ENCODE measurements at regions of chr9 and their contacts with region 1.

Region 1: GRCh38 chr9:4297151-4297785 is 2.6 kb downstream of the GLIS3 start:
- DNase-seq: peak; percentile 75
- ATAC-seq: peak; percentile 32
- H3K4me3 ChIP-seq: peak overlapping the region; percentile 94
- H3K27ac ChIP-seq: peak overlapping the region; percentile 91
- H3K4me1 ChIP-seq: peaks cover 57% of the 10 kb centered on the region
- H3K27me3 ChIP-seq: no peaks in the 10 kb centered on the region
- CTCF ChIP-seq: peak; percentile 61

Region 2: GRCh38 chr9:3875364-3876132 is 421.7 kb before region 1 on chr9:
- CTCF ChIA-PET with region 1: no interaction called
- POLR2A ChIA-PET with region 1: no interaction called
- intact Hi-C with region 1: loop called (anchors 2 kb)
- DNase-seq: peak; percentile 97
- ATAC-seq: peak; percentile 76
- H3K4me3 ChIP-seq: peak overlapping the region; percentile 10; the same call in 1 of the 2 replicates
- H3K27ac ChIP-seq: peak overlapping the region; percentile 99
- H3K4me1 ChIP-seq: peaks cover 35% of the 10 kb centered on the region
- H3K27me3 ChIP-seq: no peaks in the 10 kb centered on the region
- CTCF ChIP-seq: no peak

Region 3: GRCh38 chr9:4092793-4093709 is 204.2 kb before region 1 on chr9:
- CTCF ChIA-PET with region 1: no interaction called
- POLR2A ChIA-PET with region 1: no interaction called
- intact Hi-C with region 1: no loop called
- DNase-seq: no peak
- ATAC-seq: no peak
- H3K4me3 ChIP-seq: no peak overlapping the region
- H3K27ac ChIP-seq: no peak overlapping the region
- H3K4me1 ChIP-seq: no peaks in the 10 kb centered on the region
- H3K27me3 ChIP-seq: no peaks in the 10 kb centered on the region
- CTCF ChIP-seq: no peak

Region 4: GRCh38 chr9:4137234-4137633 is 160.0 kb before region 1 on chr9:
- CTCF ChIA-PET with region 1: no interaction called
- POLR2A ChIA-PET with region 1: no interaction called
- intact Hi-C with region 1: loop called (anchors 5 kb)
- DNase-seq: peak; percentile 96
- ATAC-seq: peak; percentile 85
- H3K4me3 ChIP-seq: peak overlapping the region; percentile 58
- H3K27ac ChIP-seq: peak overlapping the region; percentile 99
- H3K4me1 ChIP-seq: peaks cover 40% of the 10 kb centered on the region
- H3K27me3 ChIP-seq: no peaks in the 10 kb centered on the region
- CTCF ChIP-seq: no peak

Region 5: GRCh38 chr9:4315582-4316215 is 18.4 kb after region 1 on chr9:
- CTCF ChIA-PET with region 1: interaction called, 16 read pairs
- POLR2A ChIA-PET with region 1: no interaction called
- intact Hi-C with region 1: no loop called
- DNase-seq: peak; percentile 73
- ATAC-seq: peak; percentile 96
- H3K4me3 ChIP-seq: no peak overlapping the region
- H3K27ac ChIP-seq: no peak overlapping the region
- H3K4me1 ChIP-seq: no peaks in the 10 kb centered on the region
- H3K27me3 ChIP-seq: no peaks in the 10 kb centered on the region
- CTCF ChIP-seq: peak; percentile 80

Region 6: GRCh38 chr9:4353236-4353635 is 56.0 kb after region 1 on chr9:
- CTCF ChIA-PET with region 1: no interaction called
- POLR2A ChIA-PET with region 1: no interaction called
- intact Hi-C with region 1: no loop called
- DNase-seq: no peak
- ATAC-seq: no peak
- H3K4me3 ChIP-seq: no peak overlapping the region
- H3K27ac ChIP-seq: no peak overlapping the region
- H3K4me1 ChIP-seq: peaks cover 7% of the 10 kb centered on the region
- H3K27me3 ChIP-seq: no peaks in the 10 kb centered on the region
- CTCF ChIP-seq: no peak

Region 7: GRCh38 chr9:4375424-4376200 is 78.3 kb after region 1 on chr9:
- CTCF ChIA-PET with region 1: no interaction called
- POLR2A ChIA-PET with region 1: no interaction called
- intact Hi-C with region 1: loop called (anchors 5 kb)
- DNase-seq: peak; percentile 69
- ATAC-seq: peak; percentile 84
- H3K4me3 ChIP-seq: no peak overlapping the region
- H3K27ac ChIP-seq: peak overlapping the region; percentile 58
- H3K4me1 ChIP-seq: peaks cover 17% of the 10 kb centered on the region; the same call in 1 of the 2 replicates
- H3K27me3 ChIP-seq: no peaks in the 10 kb centered on the region
- CTCF ChIP-seq: peak; percentile 73